GM13976 (cell line): ENCODE measurements at regions of chr21 and their contacts with region 1.

Region 1: GRCh38 chr21:32604464-32604863 is 7.7 kb downstream of the CFAP298 start:
- DNase-seq: no peak
- CTCF ChIP-seq: no peak

Region 2: GRCh38 chr21:32403201-32403777 is 201.2 kb before region 1 on chr21:
- in situ Hi-C with region 1: loop called (anchors 10 kb)
- DNase-seq: peak; percentile 52
- CTCF ChIP-seq: peak; percentile 54

Region 3: DNA sequence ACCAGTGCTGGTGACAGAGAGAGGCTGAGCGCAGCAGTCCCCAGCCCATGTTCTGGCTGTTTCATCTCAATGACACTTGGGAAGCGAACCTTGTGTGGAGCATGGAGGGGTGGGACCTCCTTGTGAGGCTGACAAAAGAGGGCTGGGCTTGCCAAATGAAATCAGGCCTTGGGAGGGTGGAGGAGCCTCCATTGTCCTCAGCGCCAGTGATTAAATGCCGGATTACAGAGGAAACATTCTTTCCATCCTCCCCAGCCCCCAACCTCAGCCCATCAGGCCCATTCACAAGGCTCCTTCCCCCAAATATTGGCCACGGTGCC is 230.4 kb after region 1 on chr21:
- in situ Hi-C with region 1: no loop called
- DNase-seq: no peak
- CTCF ChIP-seq: no peak

Region 4: DNA sequence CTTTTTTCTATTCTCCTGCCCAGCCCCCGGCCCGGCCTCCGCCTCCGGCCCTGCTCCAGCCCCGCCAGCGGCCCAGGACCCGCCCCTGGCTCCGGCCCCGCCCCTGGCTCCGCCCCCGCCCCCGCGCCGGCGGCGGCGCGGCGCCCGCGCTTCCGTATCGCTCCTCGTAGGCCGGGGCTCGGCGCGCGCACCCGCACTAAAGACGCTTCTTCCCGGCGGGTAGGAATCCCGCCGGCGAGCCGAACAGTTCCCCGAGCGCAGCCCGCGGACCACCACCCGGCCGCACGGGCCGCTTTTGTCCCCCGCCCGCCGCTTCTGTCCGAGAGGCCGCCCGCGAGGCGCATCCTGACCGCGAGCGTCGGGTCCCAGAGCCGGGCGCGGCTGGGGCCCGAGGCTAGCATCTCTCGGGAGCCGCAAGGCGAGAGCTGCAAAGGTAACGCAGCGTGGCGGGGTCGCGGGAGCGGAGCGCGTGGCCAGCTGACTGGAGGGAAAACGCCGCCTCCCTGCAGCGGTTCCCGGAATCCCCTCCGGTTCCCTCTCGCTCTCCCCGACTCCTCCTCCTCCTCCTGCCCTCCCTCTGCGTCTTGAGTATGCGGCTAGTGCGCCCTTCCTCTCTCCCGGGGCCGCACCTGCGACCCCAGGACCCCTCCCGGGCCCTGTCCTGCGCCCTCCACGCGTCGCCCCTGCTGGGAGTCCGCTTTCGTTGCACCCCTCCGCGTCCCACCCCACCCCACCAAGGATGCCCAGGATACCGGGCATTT is 625.5 kb after region 1 on chr21 and contains the start of gene IFNAR2:
- in situ Hi-C with region 1: no loop called
- DNase-seq: peak; percentile 96
- CTCF ChIP-seq: no peak